Posterior vena cava (tissue), 2 donors: ENCODE measurements at regions of chr20 and their contacts with region 1.

Region 1: DNA sequence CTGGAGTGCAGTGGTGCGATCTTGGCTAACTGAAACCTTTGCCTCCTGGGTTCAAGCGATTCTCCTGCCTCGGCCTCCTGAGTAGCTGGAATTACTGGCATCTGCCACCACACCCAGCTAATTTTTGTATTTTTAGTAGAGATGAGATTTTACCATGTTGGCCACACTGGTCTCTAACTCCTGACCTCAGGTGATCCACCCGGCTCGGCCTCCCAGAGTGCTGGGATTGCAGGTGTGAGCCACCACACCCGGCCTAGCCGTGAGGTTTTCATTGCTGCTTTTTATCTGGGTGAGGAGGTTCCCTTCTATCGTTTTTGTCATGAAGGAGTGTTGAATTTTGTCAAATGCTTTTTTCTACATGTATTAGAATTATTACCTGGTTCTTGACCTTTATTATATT is 23.9 kb downstream of the SRC start:
- DNase-seq: peak; percentile 63

Region 2: DNA sequence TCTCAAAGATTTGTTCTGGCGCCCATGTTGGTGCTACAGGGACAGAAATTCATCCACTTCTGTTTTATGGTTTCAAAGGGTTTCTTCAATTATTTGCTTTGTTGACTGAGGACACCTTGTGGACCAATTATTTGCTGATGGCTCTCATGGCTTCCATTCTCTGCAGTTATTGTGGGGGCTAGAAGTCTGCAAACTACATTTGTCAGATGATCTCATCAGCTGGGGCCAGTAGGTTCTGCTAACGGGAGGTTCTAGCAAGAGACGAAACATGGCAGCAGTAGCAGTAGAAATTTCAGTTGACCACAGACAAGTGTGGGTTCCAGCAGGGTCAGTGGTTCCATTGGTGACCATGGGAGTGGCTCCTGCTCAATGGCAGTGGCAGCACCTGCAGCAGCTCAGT is 230.6 kb after region 1 on chr20:
- intact Hi-C with region 1: loop called in 1 of 2 experiments (anchors 5 kb)
- DNase-seq: no peak

Region 3: DNA sequence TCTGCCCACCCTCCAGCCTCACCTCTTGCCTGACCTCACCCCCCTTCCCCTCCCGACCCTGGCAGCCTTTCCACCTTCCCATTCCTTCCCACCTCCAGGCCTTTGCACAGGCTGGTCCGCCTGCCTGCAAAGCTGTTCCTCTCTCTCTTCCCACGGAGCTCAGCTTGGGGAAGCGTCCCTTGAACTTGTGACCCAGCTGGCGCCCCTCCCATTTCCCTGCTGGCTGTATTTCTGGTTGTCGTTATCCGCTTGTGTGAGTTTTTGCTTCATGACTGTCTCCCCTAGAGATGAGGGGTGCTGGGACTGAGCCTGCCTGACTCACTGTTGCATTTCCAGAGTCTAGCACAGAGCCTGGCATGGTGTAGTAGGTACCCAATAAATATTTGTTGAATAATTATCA is 565.6 kb after region 1 on chr20:
- intact Hi-C with region 1: no loop called
- DNase-seq: peak; percentile 67